RWPE1 (cell line): ENCODE measurements at regions of chr1 and their contacts with region 1.

Region 1: DNA sequence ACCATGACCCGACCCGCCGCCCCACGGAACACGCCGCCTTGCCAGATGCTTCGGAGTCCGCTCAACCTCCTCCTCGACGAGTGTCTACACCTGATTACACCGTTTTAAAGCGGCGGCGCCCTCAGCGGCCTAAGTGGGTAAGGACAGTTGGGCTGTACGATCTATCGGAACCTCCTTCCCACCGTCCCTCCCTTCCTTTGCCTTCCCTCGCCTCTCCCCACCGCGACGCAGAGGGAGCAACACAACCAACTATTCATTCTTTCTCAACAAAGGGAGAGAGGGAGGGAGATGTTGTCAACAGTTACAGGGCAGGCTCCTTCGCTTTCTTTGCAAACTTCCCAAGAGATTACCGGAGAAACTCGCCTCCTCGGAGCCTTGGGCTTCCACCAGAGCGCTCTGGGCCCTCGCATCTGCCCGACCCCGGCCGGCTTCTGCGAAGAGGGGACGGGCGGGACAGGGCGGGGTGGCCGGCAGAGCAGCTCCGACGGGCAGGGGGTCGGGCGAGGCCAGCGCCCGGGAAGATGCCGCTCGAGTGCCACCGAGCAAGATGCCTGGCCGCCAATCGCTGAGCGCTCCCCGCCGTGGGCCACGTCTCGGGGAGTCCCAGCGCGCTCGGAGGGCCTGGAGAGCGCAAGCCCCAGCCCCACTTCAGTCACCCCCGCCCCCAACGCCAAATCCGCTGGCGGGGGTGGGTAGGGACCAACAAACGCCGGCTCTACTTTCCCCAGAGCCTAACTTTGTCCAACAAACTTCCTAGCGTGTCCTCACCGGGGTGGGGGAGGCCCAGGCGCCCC is 683 bp downstream of the BCAR3 start:
- DNase-seq: peak; percentile 83
- H3K27ac ChIP-seq: peak overlapping the region; percentile 97
- CTCF ChIP-seq: peak; percentile 78

Region 2: GRCh38 chr1:93576346-93576745 is 104.6 kb before region 1 on chr1:
- CTCF ChIA-PET with region 1: no interaction called
- POLR2A ChIA-PET with region 1: no interaction called
- DNase-seq: no peak
- H3K27ac ChIP-seq: peak overlapping the region; percentile 58
- CTCF ChIP-seq: no peak

Region 3: DNA sequence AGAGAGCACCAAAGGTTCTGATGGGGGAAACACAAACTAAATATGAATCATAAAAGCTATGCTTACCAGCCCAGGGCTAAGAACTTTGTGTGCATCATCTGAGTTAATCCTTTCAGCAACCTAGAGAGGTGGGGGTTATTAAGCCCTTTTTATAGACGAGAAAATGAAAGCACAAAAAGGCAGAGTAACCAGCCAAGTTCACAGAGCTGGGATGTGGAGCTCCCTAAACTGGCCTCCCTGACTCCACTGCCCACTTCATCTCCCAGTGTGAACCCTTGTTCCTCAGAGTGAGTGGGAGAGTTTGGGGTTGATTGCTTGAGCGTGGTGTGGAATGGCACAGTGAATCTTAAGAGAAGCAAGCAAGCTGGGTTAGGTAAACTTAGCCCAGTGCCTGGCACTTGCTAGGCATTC is 11.5 kb after region 1 on chr1:
- CTCF ChIA-PET with region 1: interaction called, 11 read pairs
- POLR2A ChIA-PET with region 1: interaction called, 8 read pairs
- DNase-seq: peak; percentile 59
- H3K27ac ChIP-seq: peak overlapping the region; percentile 97
- CTCF ChIP-seq: no peak

Region 4: DNA sequence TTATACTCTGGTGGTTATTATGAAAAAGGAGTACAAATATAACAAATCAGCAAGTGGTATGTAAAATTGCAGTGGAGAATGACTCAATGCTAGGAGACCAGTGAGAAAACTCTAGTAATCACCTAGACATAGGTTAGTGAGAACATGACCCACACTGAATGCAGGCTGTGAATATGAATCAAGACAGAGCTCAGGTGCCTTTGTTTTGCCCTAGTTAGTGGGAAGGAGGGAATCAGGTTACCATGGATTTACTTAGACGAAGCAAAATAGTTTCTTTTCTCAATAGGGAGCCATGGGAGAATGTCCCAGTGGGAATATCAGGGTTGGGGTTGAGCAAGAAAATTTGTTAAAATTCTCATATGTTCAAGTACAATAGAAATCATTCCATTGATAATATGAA is 238.8 kb after region 1 on chr1:
- CTCF ChIA-PET with region 1: no interaction called
- POLR2A ChIA-PET with region 1: no interaction called
- DNase-seq: no peak
- H3K27ac ChIP-seq: no peak overlapping the region
- CTCF ChIP-seq: no peak